A673 (cell line): ENCODE measurements at regions of chr1 and their contacts with region 1.

Region 1: GRCh38 chr1:159421821-159422220 is 10.2 kb upstream of the OR10J4 start:
- DNase-seq: no peak
- H3K4me3 ChIP-seq: no peak overlapping the region
- H3K27ac ChIP-seq: no peak overlapping the region
- H3K4me1 ChIP-seq: no peaks in the 10 kb centered on the region
- H3K27me3 ChIP-seq: peaks cover 18% of the 10 kb centered on the region
- CTCF ChIP-seq: peak; percentile 46; the same call in 1 of the 2 replicates

Region 2: DNA sequence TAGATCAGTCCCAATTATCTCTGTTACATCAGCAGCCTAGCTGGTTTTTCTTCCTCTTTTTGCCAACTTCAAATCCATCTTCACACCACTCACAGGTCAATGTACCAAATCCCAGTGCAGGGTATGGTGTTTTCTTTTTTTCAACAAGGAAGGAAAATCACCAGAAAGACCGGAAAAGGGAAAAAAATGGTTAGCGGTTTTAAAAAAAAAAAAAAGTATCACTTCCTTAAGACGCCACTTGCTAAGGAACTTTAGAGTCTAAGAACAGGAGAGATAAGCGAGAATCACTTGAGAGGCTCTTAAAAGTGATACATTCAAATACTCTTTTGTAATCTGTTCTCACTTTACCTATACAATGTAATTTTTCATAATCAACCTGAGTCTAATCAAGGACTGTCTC is 14.6 kb after region 1 on chr1:
- CTCF ChIA-PET with region 1: no interaction called
- POLR2A ChIA-PET with region 1: no interaction called
- intact Hi-C with region 1: no loop called
- DNase-seq: no peak
- H3K4me3 ChIP-seq: no peak overlapping the region
- H3K27ac ChIP-seq: no peak overlapping the region
- H3K4me1 ChIP-seq: no peaks in the 10 kb centered on the region
- H3K27me3 ChIP-seq: peaks cover 58% of the 10 kb centered on the region
- CTCF ChIP-seq: no peak

Region 3: GRCh38 chr1:159560599-159560998 is 138.8 kb after region 1 on chr1:
- CTCF ChIA-PET with region 1: no interaction called
- POLR2A ChIA-PET with region 1: interaction called, 17 read pairs
- intact Hi-C with region 1: no loop called
- DNase-seq: no peak
- H3K4me3 ChIP-seq: no peak overlapping the region
- H3K27ac ChIP-seq: no peak overlapping the region
- H3K4me1 ChIP-seq: no peaks in the 10 kb centered on the region
- H3K27me3 ChIP-seq: peaks cover 3% of the 10 kb centered on the region
- CTCF ChIP-seq: no peak